GM12878 (cell line): ENCODE measurements at regions of chr3 and their contacts with region 1.

Region 1: GRCh38 chr3:25648107-25648535 is 16.6 kb downstream of the TOP2B start:
- DNase-seq: peak; percentile 76
- ATAC-seq: peak; percentile 96
- H3K4me3 ChIP-seq: no peak overlapping the region
- H3K27ac ChIP-seq: no peak overlapping the region
- H3K4me1 ChIP-seq: no peaks in the 10 kb centered on the region
- H3K27me3 ChIP-seq: no peaks in the 10 kb centered on the region
- CTCF ChIP-seq: peak; percentile 87 to 97 (median 93); a peak in 5 of 6 replicates
- EP300 ChIP-seq: no peak
- POLR2A ChIP-seq: no peak
- RAD21 ChIP-seq: peak; percentile 98

Region 2: DNA sequence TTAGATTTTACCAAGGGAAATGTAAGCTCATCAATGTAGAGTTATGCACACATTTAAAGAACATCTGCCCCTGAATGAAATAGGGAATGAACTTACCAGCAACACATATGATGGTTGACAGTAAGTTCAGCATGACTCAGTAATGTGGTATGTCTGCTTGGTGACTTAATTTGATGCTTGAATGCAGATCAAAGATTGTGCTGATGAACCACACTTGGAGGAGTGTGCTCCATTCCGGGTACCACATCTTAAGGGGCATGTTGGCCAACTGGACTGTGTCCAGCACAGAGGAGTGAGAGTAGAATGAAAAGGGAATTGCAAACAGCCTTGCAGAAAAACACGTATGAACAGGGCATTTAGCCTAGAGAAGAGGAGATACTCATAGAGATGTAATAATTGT is 391.1 kb before region 1 on chr3:
- CTCF ChIA-PET with region 1: no interaction called
- POLR2A ChIA-PET with region 1: no interaction called
- RAD21 ChIA-PET with region 1: no interaction called
- SMC1A ChIA-PET with region 1: no interaction called
- in situ Hi-C with region 1: no loop called
- intact Hi-C with region 1: no loop called
- DNase-seq: no peak
- ATAC-seq: no peak
- H3K4me3 ChIP-seq: no peak overlapping the region
- H3K27ac ChIP-seq: no peak overlapping the region
- H3K4me1 ChIP-seq: no peaks in the 10 kb centered on the region
- H3K27me3 ChIP-seq: no peaks in the 10 kb centered on the region
- CTCF ChIP-seq: no peak
- EP300 ChIP-seq: no peak
- POLR2A ChIP-seq: no peak
- RAD21 ChIP-seq: no peak

Region 3: DNA sequence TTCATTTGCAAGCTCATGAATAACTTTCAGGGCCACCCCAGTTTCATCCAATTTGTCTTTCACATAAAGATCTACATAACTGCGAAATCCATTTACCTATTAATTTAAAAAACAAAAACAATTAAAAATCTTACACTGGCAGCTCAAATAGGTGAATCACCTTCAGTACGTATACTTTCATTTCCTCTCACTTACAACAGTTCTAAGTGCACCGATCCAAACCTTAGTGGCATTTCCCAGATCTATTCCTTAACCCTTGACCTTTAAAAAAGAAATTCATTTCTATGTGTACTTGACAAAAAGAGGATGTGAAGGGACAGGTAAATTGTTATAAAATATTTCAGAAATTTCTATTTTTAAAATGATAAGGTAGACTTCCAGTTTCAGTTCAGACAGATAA is 14.2 kb before region 1 on chr3:
- CTCF ChIA-PET with region 1: interaction called, 32 read pairs
- POLR2A ChIA-PET with region 1: no interaction called
- RAD21 ChIA-PET with region 1: interaction called, 5 read pairs
- SMC1A ChIA-PET with region 1: interaction called, 9 read pairs
- in situ Hi-C with region 1: no loop called
- intact Hi-C with region 1: no loop called
- DNase-seq: no peak
- ATAC-seq: no peak
- H3K4me3 ChIP-seq: no peak overlapping the region
- H3K27ac ChIP-seq: no peak overlapping the region
- H3K4me1 ChIP-seq: no peaks in the 10 kb centered on the region
- H3K27me3 ChIP-seq: no peaks in the 10 kb centered on the region
- CTCF ChIP-seq: no peak
- EP300 ChIP-seq: no peak
- POLR2A ChIP-seq: no peak
- RAD21 ChIP-seq: no peak

Region 4: DNA sequence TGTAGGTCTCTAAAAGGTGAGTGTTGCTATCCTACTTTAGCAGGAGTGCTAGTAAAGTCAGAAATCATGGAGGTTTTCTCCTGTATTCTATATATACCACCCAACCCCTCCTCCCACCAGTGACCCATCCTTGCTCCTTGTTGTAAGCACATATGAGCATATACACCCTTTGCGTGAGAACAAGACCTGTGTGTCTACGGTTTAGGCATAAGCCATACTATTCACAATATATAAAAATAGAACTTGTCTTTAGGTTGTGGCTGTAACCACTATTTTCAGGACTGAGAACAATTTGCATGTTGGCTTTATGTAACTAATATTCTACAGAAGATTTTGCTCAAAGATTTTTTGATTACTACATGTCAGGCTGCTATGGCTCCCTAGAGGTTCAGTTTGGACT is 75.7 kb after region 1 on chr3:
- CTCF ChIA-PET with region 1: interaction called, 32 read pairs
- POLR2A ChIA-PET with region 1: no interaction called
- RAD21 ChIA-PET with region 1: interaction called, 3 read pairs
- SMC1A ChIA-PET with region 1: interaction called, 7 read pairs
- in situ Hi-C with region 1: no loop called
- intact Hi-C with region 1: no loop called
- DNase-seq: no peak
- ATAC-seq: peak; percentile 78
- H3K4me3 ChIP-seq: no peak overlapping the region
- H3K27ac ChIP-seq: no peak overlapping the region
- H3K4me1 ChIP-seq: peaks cover 9% of the 10 kb centered on the region
- H3K27me3 ChIP-seq: no peaks in the 10 kb centered on the region
- CTCF ChIP-seq: no peak
- EP300 ChIP-seq: peak in 1 of 2 experiments; percentile 25; a peak in 1 of 4 replicates
- POLR2A ChIP-seq: no peak
- RAD21 ChIP-seq: no peak

Region 5: DNA sequence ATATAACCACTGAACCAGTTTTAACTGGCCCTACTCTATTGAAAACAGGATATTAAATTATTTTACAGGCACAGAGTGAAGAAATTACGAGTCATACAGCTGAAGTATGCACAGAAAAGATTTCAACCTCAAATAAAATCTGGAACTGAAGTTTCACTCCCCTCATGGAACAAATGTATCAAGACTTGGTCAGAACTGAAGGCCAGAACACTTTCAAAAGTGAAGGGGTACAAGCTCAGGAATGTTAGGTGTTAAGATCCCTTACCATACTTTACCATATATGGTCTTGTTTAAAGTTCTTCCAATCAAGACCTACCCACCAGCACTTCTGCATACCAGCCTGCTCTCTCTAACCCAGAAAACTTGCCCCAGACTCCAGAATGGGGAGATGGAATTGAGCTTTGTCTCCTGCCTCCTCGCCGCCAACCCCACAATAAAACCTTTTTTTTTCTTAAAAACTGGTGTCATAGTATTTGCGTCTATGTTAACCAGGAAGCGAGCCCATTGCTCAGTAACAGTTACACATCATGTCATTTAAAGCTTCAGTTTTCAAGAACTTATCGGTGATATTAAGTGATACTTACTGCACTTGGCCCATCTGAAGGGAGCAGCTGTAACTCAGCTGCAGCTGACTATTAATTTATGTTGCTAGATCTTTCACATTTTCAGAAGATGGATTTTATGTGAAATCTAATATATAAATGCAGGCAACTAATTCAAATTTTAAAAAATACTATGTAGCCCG is 201.7 kb after region 1 on chr3:
- CTCF ChIA-PET with region 1: interaction called, 136 read pairs
- POLR2A ChIA-PET with region 1: no interaction called
- RAD21 ChIA-PET with region 1: interaction called, 54 read pairs
- SMC1A ChIA-PET with region 1: interaction called, 121 read pairs
- in situ Hi-C with region 1: loop called (anchors 5 kb)
- intact Hi-C with region 1: no loop called
- DNase-seq: no peak
- ATAC-seq: no peak
- H3K4me3 ChIP-seq: no peak overlapping the region
- H3K27ac ChIP-seq: no peak overlapping the region
- H3K4me1 ChIP-seq: no peaks in the 10 kb centered on the region
- H3K27me3 ChIP-seq: no peaks in the 10 kb centered on the region; a peak in 1 of 4 replicates
- CTCF ChIP-seq: no peak
- EP300 ChIP-seq: no peak
- POLR2A ChIP-seq: no peak
- RAD21 ChIP-seq: no peak

Region 6: DNA sequence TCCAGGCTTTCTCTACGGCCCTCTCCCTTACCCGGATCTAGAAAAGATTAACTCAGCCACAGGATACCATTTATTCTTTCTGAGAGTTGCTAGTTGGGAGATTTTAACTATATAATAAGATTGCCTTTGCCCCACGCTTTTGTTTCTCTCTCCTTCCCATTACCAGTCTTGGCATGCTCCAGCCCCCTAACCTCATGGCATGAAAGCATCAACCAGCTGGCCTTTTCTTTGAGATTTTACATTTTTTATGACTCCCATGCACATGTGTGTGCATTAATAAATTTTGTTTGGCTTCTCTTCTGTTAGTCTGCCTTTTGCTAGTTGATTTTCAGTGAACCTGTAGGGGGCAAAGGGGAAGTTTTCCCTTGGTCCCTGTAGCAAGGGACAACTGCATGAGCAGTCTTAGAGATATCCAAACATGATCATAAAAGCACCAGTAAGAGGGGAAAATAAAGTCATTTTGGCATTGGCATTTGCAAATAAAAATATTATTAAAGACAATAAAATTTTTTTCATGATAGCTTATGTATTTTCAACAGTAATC is 215.4 kb after region 1 on chr3:
- CTCF ChIA-PET with region 1: interaction called, 136 read pairs
- POLR2A ChIA-PET with region 1: interaction called, 3 read pairs
- RAD21 ChIA-PET with region 1: interaction called, 10 read pairs
- SMC1A ChIA-PET with region 1: interaction called, 121 read pairs
- in situ Hi-C with region 1: loop called (anchors 5 kb)
- intact Hi-C with region 1: no loop called
- DNase-seq: no peak
- ATAC-seq: peak; percentile 82
- H3K4me3 ChIP-seq: no peak overlapping the region
- H3K27ac ChIP-seq: no peak overlapping the region
- H3K4me1 ChIP-seq: peaks cover 3% of the 10 kb centered on the region; the same call in 1 of the 2 replicates
- H3K27me3 ChIP-seq: no peaks in the 10 kb centered on the region
- CTCF ChIP-seq: peak in 2 of 3 experiments; percentile 31 to 36; a peak in 3 of 6 replicates
- EP300 ChIP-seq: no peak
- POLR2A ChIP-seq: no peak
- RAD21 ChIP-seq: 0 out of 2 replicates have a peak, but pooled peaks have one; percentile 8

Region 7: DNA sequence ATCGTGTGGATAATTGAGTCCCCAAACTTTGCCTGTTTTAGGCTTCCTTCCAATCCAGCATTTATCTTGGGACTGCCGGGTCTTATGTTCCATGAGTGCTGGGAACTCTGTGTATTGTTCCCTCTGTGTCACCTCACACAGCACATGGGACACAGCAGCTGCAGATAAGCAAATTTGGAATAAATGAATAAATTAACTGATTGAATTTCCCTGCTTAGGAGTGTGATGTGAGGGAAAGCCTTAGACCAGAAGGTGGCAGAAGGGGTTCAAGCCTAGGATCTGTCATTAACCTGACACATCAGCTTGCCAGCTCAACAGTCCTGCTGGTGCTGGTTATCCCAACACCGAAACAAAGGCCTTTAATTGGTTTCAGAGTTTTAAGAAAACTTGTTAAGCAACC is 256.1 kb after region 1 on chr3:
- CTCF ChIA-PET with region 1: interaction called, 18 read pairs
- POLR2A ChIA-PET with region 1: no interaction called
- RAD21 ChIA-PET with region 1: interaction called, 4 read pairs
- SMC1A ChIA-PET with region 1: interaction called, 10 read pairs
- in situ Hi-C with region 1: loop called (anchors 5 kb)
- intact Hi-C with region 1: no loop called
- DNase-seq: no peak
- ATAC-seq: peak; percentile 31; the same call in 1 of the 3 replicates
- H3K4me3 ChIP-seq: no peak overlapping the region
- H3K27ac ChIP-seq: no peak overlapping the region
- H3K4me1 ChIP-seq: no peaks in the 10 kb centered on the region
- H3K27me3 ChIP-seq: 0 out of 4 replicates have a peak, but pooled peaks cover 0 to 2% of the 10 kb centered on the region in 2 experiments
- CTCF ChIP-seq: peak in 1 of 3 experiments; percentile 6; a peak in 1 of 6 replicates
- EP300 ChIP-seq: no peak
- POLR2A ChIP-seq: no peak
- RAD21 ChIP-seq: peak; percentile 52

Region 8: GRCh38 chr3:26703519-26703918 is 1055.4 kb after region 1 on chr3:
- CTCF ChIA-PET with region 1: no interaction called
- POLR2A ChIA-PET with region 1: no interaction called
- RAD21 ChIA-PET with region 1: no interaction called
- SMC1A ChIA-PET with region 1: no interaction called
- in situ Hi-C with region 1: loop called (anchors 10 kb)
- intact Hi-C with region 1: no loop called
- DNase-seq: no peak
- ATAC-seq: peak; percentile 53
- H3K4me3 ChIP-seq: no peak overlapping the region
- H3K27ac ChIP-seq: no peak overlapping the region
- H3K4me1 ChIP-seq: no peaks in the 10 kb centered on the region
- H3K27me3 ChIP-seq: no peaks in the 10 kb centered on the region
- CTCF ChIP-seq: no peak
- EP300 ChIP-seq: peak in 1 of 2 experiments; percentile 23; a peak in 1 of 4 replicates
- POLR2A ChIP-seq: no peak
- RAD21 ChIP-seq: no peak